ENCODE measurements at regions of chr2 and their contacts with region 1.

Region 1: DNA sequence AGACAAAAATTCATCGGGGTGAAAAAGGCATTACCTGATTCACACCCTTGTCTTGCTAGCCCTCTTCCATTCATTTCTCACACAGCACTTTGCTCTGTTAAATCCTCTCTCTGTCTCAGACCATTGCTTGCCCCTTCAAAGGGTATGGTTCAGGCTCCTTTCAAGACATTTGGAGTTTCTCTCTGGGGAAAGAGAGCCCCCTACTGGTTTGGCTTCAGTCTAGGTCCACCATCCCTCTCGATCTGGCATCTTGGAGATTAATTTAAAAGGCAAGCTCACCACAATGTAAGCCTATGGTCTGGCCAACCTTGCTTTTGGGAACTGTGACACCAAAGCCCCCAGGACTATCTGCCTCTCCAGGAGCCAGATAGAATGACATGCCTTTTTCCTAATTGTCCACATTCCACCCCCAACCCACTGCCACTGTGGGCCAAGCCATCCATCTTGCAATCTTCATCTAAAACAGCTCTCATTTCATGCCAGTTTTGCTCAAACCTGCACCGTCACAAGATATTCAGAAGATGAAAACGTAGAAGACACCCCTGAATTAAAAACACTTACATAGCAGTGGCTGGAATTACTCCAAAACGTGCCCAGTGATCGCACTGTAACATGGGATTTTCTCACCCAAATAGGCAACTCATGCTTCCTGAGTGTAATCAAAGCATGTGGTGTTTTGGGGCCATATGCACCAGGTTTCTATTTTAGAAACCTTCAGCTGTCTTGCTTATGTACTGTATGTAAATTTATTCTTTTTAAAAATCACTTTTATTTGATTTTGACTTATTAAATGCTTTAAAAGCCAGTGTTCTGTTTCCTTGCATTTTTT is 93.9 kb downstream of the FARSB start:
- DNase-seq: peak; percentile 60
- H3K4me3 ChIP-seq: no peak overlapping the region
- H3K27ac ChIP-seq: no peak overlapping the region
- H3K4me1 ChIP-seq: no peaks in the 10 kb centered on the region
- H3K27me3 ChIP-seq: no peaks in the 10 kb centered on the region
- CTCF ChIP-seq: peak; percentile 74 to 75
- POLR2A ChIP-seq: no peak

Region 2: GRCh38 chr2:222024932-222025880 is 536.8 kb before region 1 on chr2:
- CTCF ChIA-PET with region 1: interaction called, 22 read pairs
- POLR2A ChIA-PET with region 1: no interaction called
- dilution Hi-C with region 1: no loop called
- intact Hi-C with region 1: no loop called
- DNase-seq: peak; percentile 50
- H3K4me3 ChIP-seq: no peak overlapping the region
- H3K27ac ChIP-seq: no peak overlapping the region
- H3K4me1 ChIP-seq: no peaks in the 10 kb centered on the region
- H3K27me3 ChIP-seq: peaks cover 0 to 8% of the 10 kb centered on the region in 2 experiments
- CTCF ChIP-seq: peak; percentile 24 to 45
- POLR2A ChIP-seq: no peak

Region 3: GRCh38 chr2:222038067-222038802 is 523.8 kb before region 1 on chr2:
- CTCF ChIA-PET with region 1: interaction called, 21 read pairs
- POLR2A ChIA-PET with region 1: no interaction called
- dilution Hi-C with region 1: no loop called
- intact Hi-C with region 1: no loop called
- DNase-seq: no peak
- H3K4me3 ChIP-seq: no peak overlapping the region
- H3K27ac ChIP-seq: no peak overlapping the region
- H3K4me1 ChIP-seq: no peaks in the 10 kb centered on the region
- H3K27me3 ChIP-seq: no peaks in the 10 kb centered on the region
- CTCF ChIP-seq: peak in 1 of 2 donors; percentile 10
- POLR2A ChIP-seq: no peak

Region 4: GRCh38 chr2:222057347-222058073 is 504.5 kb before region 1 on chr2:
- CTCF ChIA-PET with region 1: interaction called, 21 read pairs
- POLR2A ChIA-PET with region 1: no interaction called
- dilution Hi-C with region 1: no loop called
- intact Hi-C with region 1: loop called (anchors 1 kb)
- DNase-seq: peak; percentile 8
- H3K4me3 ChIP-seq: no peak overlapping the region
- H3K27ac ChIP-seq: no peak overlapping the region
- H3K4me1 ChIP-seq: no peaks in the 10 kb centered on the region
- H3K27me3 ChIP-seq: peaks cover 3 to 10% of the 10 kb centered on the region in 2 experiments
- CTCF ChIP-seq: peak; percentile 23 to 40
- POLR2A ChIP-seq: no peak

Region 5: GRCh38 chr2:222336439-222336838 is 225.6 kb before region 1 on chr2:
- CTCF ChIA-PET with region 1: interaction called, 14 read pairs
- POLR2A ChIA-PET with region 1: no interaction called
- dilution Hi-C with region 1: no loop called
- intact Hi-C with region 1: no loop called
- DNase-seq: no peak
- H3K4me3 ChIP-seq: no peak overlapping the region
- H3K27ac ChIP-seq: no peak overlapping the region
- H3K4me1 ChIP-seq: no peaks in the 10 kb centered on the region
- H3K27me3 ChIP-seq: peaks cover 2 to 5% of the 10 kb centered on the region in 2 experiments
- CTCF ChIP-seq: no peak
- POLR2A ChIP-seq: no peak

Region 6: DNA sequence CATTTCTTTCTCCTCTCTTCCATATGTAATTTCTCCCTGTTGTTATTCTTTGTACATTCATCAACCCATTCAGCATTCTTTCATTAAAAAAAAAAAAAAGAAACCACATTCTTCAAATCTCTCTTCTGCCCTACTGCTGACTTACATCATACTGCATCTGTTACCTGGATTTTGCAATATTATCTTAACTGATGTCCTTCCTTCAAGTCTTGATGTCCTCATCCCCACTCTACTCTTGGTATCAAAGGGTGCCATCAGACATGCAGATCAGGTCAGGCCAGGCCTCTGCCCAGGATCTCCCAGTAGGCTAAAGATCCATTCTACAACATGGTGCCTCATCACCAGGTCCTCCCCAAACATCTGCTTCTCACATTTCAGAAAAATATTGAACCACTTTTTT is 47.1 kb before region 1 on chr2:
- CTCF ChIA-PET with region 1: no interaction called
- POLR2A ChIA-PET with region 1: no interaction called
- dilution Hi-C with region 1: no loop called
- intact Hi-C with region 1: no loop called
- DNase-seq: no peak
- H3K4me3 ChIP-seq: no peak overlapping the region
- H3K27ac ChIP-seq: no peak overlapping the region
- H3K4me1 ChIP-seq: no peaks in the 10 kb centered on the region
- H3K27me3 ChIP-seq: peaks cover 0 to 2% of the 10 kb centered on the region in 2 experiments
- CTCF ChIP-seq: no peak
- POLR2A ChIP-seq: no peak

Region 7: DNA sequence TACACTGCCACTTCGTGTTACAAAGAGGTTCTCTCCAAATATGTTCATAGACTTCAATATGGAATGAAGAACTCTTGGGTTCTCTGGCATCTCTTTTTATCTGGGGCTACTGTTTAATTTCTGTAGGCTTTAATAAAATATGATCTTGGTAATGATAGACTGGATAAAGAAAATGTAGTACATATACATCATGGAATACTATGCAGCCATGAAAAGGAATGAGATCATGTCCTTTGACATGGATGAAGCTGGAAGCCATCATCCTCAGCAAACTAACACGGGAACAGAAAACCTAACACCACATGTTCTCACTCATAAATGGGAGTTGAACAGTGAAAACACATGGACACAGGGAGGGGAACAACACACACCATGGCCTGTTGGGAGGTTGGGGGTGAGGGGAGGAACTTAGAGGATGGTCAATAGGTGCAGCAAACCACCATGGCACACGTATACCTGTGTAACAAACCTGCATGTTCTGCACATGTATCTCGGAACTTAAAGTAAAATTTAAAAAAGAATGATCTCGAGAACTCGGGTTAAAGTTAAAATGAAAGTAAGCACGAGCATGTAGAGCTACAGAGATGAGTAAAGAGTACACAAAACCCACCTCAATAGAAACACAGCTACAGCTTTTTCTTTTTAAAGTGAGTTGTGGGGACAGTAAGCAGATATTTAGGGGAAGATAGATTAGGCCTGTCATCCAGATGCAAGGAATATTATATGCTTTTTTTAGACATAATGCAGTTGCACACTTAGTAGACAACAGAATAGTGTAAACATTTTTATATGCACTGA is 35.4 kb before region 1 on chr2:
- CTCF ChIA-PET with region 1: no interaction called
- POLR2A ChIA-PET with region 1: no interaction called
- dilution Hi-C with region 1: no loop called
- intact Hi-C with region 1: no loop called
- DNase-seq: no peak
- H3K4me3 ChIP-seq: no peak overlapping the region
- H3K27ac ChIP-seq: no peak overlapping the region
- H3K4me1 ChIP-seq: no peaks in the 10 kb centered on the region
- H3K27me3 ChIP-seq: no peaks in the 10 kb centered on the region
- CTCF ChIP-seq: no peak
- POLR2A ChIP-seq: no peak

Region 8: DNA sequence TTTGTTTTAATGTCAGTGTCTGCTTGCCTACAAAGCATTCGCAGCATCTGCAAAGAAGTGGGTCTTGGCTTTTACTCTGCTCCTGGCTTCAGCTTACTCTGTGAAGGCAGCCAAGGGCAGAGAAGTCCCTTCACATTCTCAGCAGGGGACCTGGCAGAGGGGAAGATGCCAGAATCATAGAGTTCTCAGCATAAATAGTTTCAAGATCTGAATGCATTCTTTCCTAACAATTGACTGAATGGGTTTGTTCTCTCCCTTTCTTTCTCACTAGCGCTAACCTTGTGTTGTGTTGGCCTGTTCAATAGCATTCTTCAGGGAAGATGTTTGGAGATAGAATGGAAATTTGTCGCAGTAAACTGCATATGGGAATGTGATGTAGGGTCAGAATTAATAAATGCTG is 13.0 kb before region 1 on chr2:
- CTCF ChIA-PET with region 1: interaction called, 10 read pairs
- POLR2A ChIA-PET with region 1: interaction called, 4 read pairs
- dilution Hi-C with region 1: no loop called
- intact Hi-C with region 1: no loop called
- DNase-seq: no peak
- H3K4me3 ChIP-seq: no peak overlapping the region
- H3K27ac ChIP-seq: no peak overlapping the region
- H3K4me1 ChIP-seq: no peaks in the 10 kb centered on the region
- H3K27me3 ChIP-seq: peaks cover 9 to 25% of the 10 kb centered on the region in 2 experiments
- CTCF ChIP-seq: no peak
- POLR2A ChIP-seq: no peak

Region 9: DNA sequence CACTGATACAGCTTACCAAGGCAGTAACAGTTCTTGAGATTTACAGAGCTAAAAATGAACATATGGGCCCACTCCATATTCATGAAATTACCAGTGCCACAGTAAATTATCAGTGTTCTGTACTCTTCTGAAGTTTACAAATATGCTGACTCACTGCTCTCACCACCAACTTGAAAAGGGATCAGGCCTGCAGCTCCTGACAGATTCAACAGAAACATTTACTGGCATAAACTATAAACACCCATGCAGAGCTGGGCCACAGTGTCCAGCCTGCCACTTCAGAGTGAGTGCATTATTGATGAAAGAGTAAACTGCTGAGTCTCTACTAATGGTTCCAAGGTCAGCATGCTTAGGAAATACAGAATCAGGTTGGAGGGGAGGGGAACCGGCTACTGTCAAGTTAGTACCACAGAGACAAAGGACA is 10.7 kb after region 1 on chr2:
- CTCF ChIA-PET with region 1: interaction called, 28 read pairs
- POLR2A ChIA-PET with region 1: no interaction called
- dilution Hi-C with region 1: no loop called
- intact Hi-C with region 1: no loop called
- DNase-seq: peak; percentile 8
- H3K4me3 ChIP-seq: no peak overlapping the region
- H3K27ac ChIP-seq: no peak overlapping the region
- H3K4me1 ChIP-seq: peaks cover 10% of the 10 kb centered on the region
- H3K27me3 ChIP-seq: no peaks in the 10 kb centered on the region
- CTCF ChIP-seq: no peak
- POLR2A ChIP-seq: no peak

Region 10: DNA sequence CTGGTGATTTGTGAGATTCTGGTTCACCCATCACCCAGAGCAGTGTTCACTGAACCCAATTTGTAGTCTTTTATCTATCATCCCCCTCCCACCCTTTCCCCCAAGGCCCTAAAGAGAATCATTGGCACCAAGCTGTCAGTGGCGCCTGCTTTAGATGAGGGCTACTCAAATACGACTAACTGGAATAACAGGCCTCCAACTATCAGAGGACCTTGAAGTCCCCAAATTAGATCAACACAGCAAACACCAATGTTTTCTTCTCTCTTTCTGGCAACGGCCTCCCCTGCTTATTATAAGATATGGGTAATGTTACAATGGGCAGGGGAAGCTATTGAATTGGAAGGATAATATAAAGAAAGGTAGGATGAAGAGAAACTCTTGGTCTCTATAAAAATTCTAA is 807.9 kb after region 1 on chr2:
- CTCF ChIA-PET with region 1: no interaction called
- POLR2A ChIA-PET with region 1: no interaction called
- dilution Hi-C with region 1: no loop called
- intact Hi-C with region 1: no loop called
- DNase-seq: no peak
- H3K4me3 ChIP-seq: no peak overlapping the region
- H3K27ac ChIP-seq: no peak overlapping the region
- H3K4me1 ChIP-seq: no peaks in the 10 kb centered on the region
- H3K27me3 ChIP-seq: no peaks in the 10 kb centered on the region
- CTCF ChIP-seq: no peak
- POLR2A ChIP-seq: no peak